ENCODE measurements at regions of chr6 and their contacts with region 1.

Region 1: DNA sequence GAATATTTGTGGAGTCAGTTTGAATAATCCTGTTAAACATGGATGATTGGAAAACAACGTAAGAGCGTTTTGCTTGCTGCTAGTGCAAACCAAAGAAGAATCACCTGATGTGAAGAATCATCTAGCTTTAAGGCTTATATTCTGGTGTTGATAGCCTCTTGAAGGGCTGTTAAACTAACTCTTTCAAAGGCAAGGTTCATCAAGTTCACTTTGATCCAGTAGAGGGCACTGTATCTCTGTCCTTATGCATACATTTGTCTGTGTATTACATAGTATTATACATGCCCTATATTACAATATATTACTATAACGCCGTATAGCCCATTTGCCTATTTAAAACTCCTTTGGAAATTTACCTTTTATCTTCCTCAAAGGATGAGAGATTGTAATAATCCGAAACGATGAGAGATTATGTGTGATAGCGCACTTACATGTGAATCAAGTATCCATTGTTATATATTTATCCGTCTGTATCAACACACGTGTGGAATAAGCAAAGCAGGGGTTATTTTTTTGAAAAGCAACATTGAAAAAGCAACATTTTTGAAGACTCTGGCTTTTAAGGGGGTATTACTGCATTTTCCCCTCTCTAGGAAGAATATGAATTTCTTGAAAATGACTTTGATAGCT is 50.8 kb upstream of the NRN1 start:
- DNase-seq: peak; percentile 35
- ATAC-seq: peak; percentile 92
- H3K4me3 ChIP-seq: no peak overlapping the region
- H3K27ac ChIP-seq: no peak overlapping the region
- H3K4me1 ChIP-seq: no peaks in the 10 kb centered on the region
- H3K27me3 ChIP-seq: peaks cover 28% of the 10 kb centered on the region
- CTCF ChIP-seq: peak; percentile 58 to 60 (median 59); a peak in 5 of 6 replicates
- POLR2A ChIP-seq: no peak
- RAD21 ChIP-seq: peak; percentile 67

Region 2: DNA sequence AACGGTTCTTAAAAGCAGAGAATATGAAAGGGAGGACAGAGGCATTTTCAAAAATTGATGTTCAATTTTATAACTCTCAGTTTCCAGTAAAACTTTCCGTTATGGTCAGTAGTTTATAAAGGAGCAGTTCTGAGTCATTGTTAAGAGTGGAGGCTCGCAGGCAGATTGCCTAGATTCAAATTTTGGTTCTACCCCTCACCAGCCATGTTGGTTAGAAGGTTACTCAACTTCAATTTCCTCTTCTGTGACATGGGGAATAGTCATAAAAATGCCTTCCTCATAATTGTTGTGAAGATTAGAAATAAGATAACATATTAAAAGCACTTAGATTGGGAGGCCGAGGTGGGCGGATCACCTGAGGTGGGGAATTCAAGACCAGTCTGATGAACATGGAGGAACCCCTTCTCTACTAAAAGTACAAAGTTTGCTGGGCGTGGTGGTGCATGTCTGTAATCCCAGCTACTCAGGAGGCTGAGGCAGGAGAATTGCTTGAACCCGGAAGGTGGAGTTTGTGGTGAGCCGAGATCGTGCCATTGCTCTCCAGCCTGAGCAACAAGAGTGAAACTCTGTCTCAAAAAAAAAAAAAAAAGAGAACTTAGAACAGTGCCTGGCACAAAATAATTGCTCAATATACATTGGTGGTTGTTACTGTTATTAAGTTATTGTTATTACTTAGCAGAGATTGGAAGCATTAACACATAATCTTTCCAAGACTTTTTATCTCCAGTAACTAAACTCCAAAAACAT is 399.7 kb before region 1 on chr6:
- CTCF ChIA-PET with region 1: no interaction called
- POLR2A ChIA-PET with region 1: no interaction called
- RAD21 ChIA-PET with region 1: no interaction called
- intact Hi-C with region 1: no loop called
- DNase-seq: no peak
- ATAC-seq: no peak
- H3K4me3 ChIP-seq: no peak overlapping the region
- H3K27ac ChIP-seq: no peak overlapping the region
- H3K4me1 ChIP-seq: no peaks in the 10 kb centered on the region
- H3K27me3 ChIP-seq: no peaks in the 10 kb centered on the region
- CTCF ChIP-seq: no peak
- POLR2A ChIP-seq: no peak
- RAD21 ChIP-seq: no peak

Region 3: GRCh38 chr6:5898559-5898958 is 159.0 kb before region 1 on chr6:
- CTCF ChIA-PET with region 1: no interaction called
- POLR2A ChIA-PET with region 1: no interaction called
- RAD21 ChIA-PET with region 1: no interaction called
- intact Hi-C with region 1: no loop called
- DNase-seq: no peak
- ATAC-seq: peak; percentile 77
- H3K4me3 ChIP-seq: no peak overlapping the region
- H3K27ac ChIP-seq: no peak overlapping the region
- H3K4me1 ChIP-seq: no peaks in the 10 kb centered on the region
- H3K27me3 ChIP-seq: no peaks in the 10 kb centered on the region
- CTCF ChIP-seq: 0 out of 6 replicates have a peak, but pooled peaks of 1 of the 3 experiments have one; percentile 31
- POLR2A ChIP-seq: no peak
- RAD21 ChIP-seq: 0 out of 2 replicates have a peak, but pooled peaks have one; percentile 15

Region 4: GRCh38 chr6:6191475-6191874 is 133.9 kb after region 1 on chr6:
- CTCF ChIA-PET with region 1: no interaction called
- POLR2A ChIA-PET with region 1: no interaction called
- RAD21 ChIA-PET with region 1: no interaction called
- intact Hi-C with region 1: no loop called
- DNase-seq: no peak
- ATAC-seq: no peak
- H3K4me3 ChIP-seq: no peak overlapping the region
- H3K27ac ChIP-seq: no peak overlapping the region
- H3K4me1 ChIP-seq: no peaks in the 10 kb centered on the region
- H3K27me3 ChIP-seq: 0 out of 2 replicates have a peak, but pooled peaks cover 11% of the 10 kb centered on the region
- CTCF ChIP-seq: no peak
- POLR2A ChIP-seq: no peak
- RAD21 ChIP-seq: no peak

Region 5: GRCh38 chr6:6494677-6495076 is 437.1 kb after region 1 on chr6:
- CTCF ChIA-PET with region 1: interaction called, 5 read pairs
- POLR2A ChIA-PET with region 1: no interaction called
- RAD21 ChIA-PET with region 1: interaction called in 1 of 2 experiments, 3 read pairs
- intact Hi-C with region 1: loop called (anchors 2 kb)
- DNase-seq: peak; percentile 49
- ATAC-seq: peak; percentile 97
- H3K4me3 ChIP-seq: no peak overlapping the region
- H3K27ac ChIP-seq: no peak overlapping the region
- H3K4me1 ChIP-seq: no peaks in the 10 kb centered on the region
- H3K27me3 ChIP-seq: peaks cover 23% of the 10 kb centered on the region
- CTCF ChIP-seq: peak; percentile 53 to 77 (median 77); a peak in 5 of 6 replicates
- POLR2A ChIP-seq: no peak
- RAD21 ChIP-seq: peak; percentile 74